Gastrocnemius medialis (tissue), 4 donors: ENCODE measurements at regions of chr11 and their contacts with region 1.

Region 1: DNA sequence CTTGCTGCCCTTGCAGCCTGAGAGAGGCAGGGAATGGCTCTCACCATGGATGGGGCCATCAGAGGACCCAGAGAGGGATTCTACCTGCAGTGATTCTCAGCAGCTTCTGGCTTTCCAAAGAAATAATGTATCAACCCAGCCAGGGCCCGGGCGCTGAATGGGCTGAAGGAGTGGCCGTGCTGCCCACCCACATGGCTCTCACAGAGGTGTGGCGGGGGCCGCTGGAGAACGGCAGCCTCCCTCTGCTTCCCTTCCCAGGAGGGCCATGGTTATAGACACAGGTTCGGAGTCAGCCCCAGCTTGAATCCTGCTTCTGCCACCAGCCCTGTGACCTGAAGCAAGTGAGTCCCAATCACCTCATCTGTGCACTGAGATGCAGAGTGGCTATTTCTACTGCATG is 82.7 kb downstream of the THAP12 start:
- DNase-seq: no peak
- ATAC-seq: no peak
- H3K4me3 ChIP-seq: no peak overlapping the region
- H3K27ac ChIP-seq: no peak overlapping the region
- H3K4me1 ChIP-seq: no peaks in the 10 kb centered on the region
- H3K27me3 ChIP-seq: no peaks in the 10 kb centered on the region
- CTCF ChIP-seq: no peak
- POLR2A ChIP-seq: no peak

Region 2: GRCh38 chr11:76250520-76251225 is 47.6 kb before region 1 on chr11:
- in situ Hi-C with region 1: no loop called
- intact Hi-C with region 1: loop called (anchors 1 kb)
- DNase-seq: peak in 1 of 2 donors; percentile 60
- ATAC-seq: peak in 1 of 2 donors; percentile 20
- H3K4me3 ChIP-seq: no peak overlapping the region
- H3K27ac ChIP-seq: peak overlapping the region in 2 of 4 donors; percentile 28 to 46
- H3K4me1 ChIP-seq: no peaks in the 10 kb centered on the region
- H3K27me3 ChIP-seq: no peaks in the 10 kb centered on the region
- CTCF ChIP-seq: no peak
- POLR2A ChIP-seq: no peak

Region 3: GRCh38 chr11:76347466-76347865 is 49.2 kb after region 1 on chr11:
- in situ Hi-C with region 1: no loop called
- intact Hi-C with region 1: no loop called
- DNase-seq: no peak
- ATAC-seq: no peak
- H3K4me3 ChIP-seq: no peak overlapping the region
- H3K27ac ChIP-seq: no peak overlapping the region
- H3K4me1 ChIP-seq: peaks cover 14 to 16% of the 10 kb centered on the region in 2 donors
- H3K27me3 ChIP-seq: no peaks in the 10 kb centered on the region
- CTCF ChIP-seq: no peak
- POLR2A ChIP-seq: no peak